Activated CD8-positive, alpha-beta T cell treated with anti-CD3 and anti-CD28 coated beads for 36 hours (primary cell): ENCODE measurements at regions of chr6 and their contacts with region 1.

Region 1: GRCh38 chr6:30483677-30484279 is 5.5 kb upstream of the HLA-E start:
- DNase-seq: peak; percentile 51
- ATAC-seq: no peak
- H3K4me3 Mint-ChIP-seq: no peak overlapping the region
- H3K27ac Mint-ChIP-seq: no peak overlapping the region
- H3K4me1 Mint-ChIP-seq: peaks cover 42% of the 10 kb centered on the region
- H3K27me3 Mint-ChIP-seq: peaks cover 37% of the 10 kb centered on the region
- CTCF ChIP-seq: peak; percentile 84

Region 2: DNA sequence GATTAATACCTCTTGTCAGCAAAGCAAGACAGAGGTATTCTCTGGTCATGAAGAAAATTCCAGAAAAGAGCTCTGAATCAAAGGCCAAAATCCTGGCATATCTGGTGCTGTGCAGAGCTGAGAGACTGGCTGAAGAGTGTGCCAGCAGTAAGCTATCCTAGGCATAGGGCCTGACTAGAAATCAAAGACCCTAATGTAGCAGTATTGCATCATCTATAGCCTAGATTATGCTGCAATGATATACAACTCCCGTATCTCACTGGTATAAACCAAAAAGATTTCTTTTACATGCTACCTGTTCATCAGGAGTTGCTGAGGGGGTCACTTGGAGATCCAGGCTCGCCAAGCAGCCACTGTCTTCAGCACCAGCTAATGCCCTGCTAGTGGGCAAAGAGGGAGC is 187.9 kb before region 1 on chr6:
- CTCF ChIA-PET with region 1: no interaction called
- POLR2A ChIA-PET with region 1: no interaction called
- intact Hi-C with region 1: no loop called
- DNase-seq: no peak
- ATAC-seq: no peak
- H3K4me3 Mint-ChIP-seq: no peak overlapping the region
- H3K27ac Mint-ChIP-seq: peak overlapping the region; percentile 25
- H3K4me1 Mint-ChIP-seq: no peaks in the 10 kb centered on the region
- H3K27me3 Mint-ChIP-seq: no peaks in the 10 kb centered on the region
- CTCF ChIP-seq: no peak

Region 3: DNA sequence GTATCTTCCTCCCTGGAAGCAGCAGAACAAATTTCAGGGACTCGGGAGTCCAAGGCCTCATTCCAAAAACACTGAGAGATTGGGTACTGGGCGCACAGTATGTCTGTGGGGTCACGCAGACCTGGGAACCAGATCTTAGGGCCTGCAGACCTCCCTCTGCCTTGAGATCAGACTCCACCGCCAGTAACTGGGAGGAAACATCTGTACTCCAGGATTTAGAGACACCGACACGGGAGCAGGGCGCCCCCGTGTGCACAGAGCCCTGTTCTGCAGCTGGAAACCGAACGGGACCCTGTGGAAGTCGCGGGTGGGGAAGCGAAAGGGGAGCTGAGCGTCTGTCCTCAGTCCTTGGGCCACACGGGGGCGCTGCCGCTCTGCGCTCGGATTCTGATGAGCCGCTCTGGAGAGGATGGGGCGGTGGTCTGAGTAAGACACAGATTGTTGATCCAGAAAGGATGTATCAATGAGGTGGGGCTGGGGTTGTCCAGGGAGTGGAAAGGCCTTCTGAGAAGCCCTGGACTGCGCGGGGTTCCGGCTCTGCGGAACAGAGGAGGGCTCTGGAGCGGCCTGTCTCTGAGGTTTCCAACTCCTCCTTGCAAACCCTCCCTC is 30.2 kb before region 1 on chr6:
- CTCF ChIA-PET with region 1: interaction called, 10 read pairs
- POLR2A ChIA-PET with region 1: interaction called, 4 read pairs
- intact Hi-C with region 1: no loop called
- DNase-seq: peak; percentile 95
- ATAC-seq: peak; percentile 91
- H3K4me3 Mint-ChIP-seq: no peak overlapping the region
- H3K27ac Mint-ChIP-seq: no peak overlapping the region
- H3K4me1 Mint-ChIP-seq: peaks cover 29% of the 10 kb centered on the region
- H3K27me3 Mint-ChIP-seq: peaks cover 82% of the 10 kb centered on the region
- CTCF ChIP-seq: peak; percentile 70

Region 4: GRCh38 chr6:30508890-30509736 is 25.3 kb after region 1 on chr6:
- CTCF ChIA-PET with region 1: interaction called, 24 read pairs
- POLR2A ChIA-PET with region 1: interaction called, 6 read pairs
- intact Hi-C with region 1: no loop called
- DNase-seq: peak; percentile 39
- ATAC-seq: peak; percentile 65
- H3K4me3 Mint-ChIP-seq: peak overlapping the region; percentile 48
- H3K27ac Mint-ChIP-seq: peak overlapping the region; percentile 95
- H3K4me1 Mint-ChIP-seq: peaks cover 53% of the 10 kb centered on the region
- H3K27me3 Mint-ChIP-seq: no peaks in the 10 kb centered on the region
- CTCF ChIP-seq: no peak

Region 5: DNA sequence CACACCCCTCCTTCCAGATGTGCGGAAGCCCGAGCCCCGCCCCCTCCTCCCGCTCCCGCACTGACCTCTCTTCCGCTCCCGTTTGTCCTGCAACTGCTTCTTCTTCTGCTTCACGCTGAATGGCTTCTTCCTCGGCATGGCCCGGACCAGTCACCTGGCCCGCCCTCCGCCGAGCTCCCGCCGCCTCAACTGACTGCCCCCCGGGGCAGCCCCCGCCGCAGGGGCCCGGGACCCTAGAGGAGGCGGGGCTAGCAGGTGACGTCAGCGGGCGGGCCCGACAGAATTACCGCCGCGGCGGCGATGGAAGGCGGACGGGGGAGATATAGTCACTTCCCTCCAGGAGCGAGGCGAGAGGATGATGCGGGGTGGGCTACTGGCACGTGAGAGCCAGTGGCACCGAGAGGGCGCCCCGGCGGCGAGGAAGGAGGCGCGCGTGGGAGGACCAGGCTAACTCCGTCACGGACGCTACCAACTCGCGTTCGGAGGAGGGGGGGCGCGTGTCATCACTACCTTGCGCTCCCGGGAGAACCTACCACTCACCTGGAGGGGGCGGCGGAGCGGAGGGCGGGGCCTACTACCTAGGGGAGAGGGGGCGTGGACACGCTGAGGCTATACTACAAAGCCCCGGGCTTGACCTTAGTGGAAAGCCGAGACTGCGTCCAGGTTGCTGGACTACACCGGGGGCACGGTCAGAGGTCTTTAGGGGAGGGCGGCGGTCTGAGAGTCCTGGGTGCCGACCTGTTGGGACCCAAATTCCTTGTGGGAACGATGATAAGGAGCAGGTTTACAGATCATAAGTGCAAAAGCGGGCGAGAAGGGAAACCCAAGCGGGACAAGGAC is 72.5 kb after region 1 on chr6 and contains the start of gene GNL1:
- CTCF ChIA-PET with region 1: interaction called, 515 read pairs
- POLR2A ChIA-PET with region 1: interaction called, 4 read pairs
- intact Hi-C with region 1: no loop called
- DNase-seq: peak; percentile 100
- ATAC-seq: peak; percentile 93
- H3K4me3 Mint-ChIP-seq: peak within 1 kb of the TSS; percentile 91
- H3K27ac Mint-ChIP-seq: peak within 1 kb of the TSS; percentile 99
- H3K4me1 Mint-ChIP-seq: peaks cover 35% of the 10 kb centered on the region
- H3K27me3 Mint-ChIP-seq: no peaks in the 10 kb centered on the region
- CTCF ChIP-seq: no peak
- total RNA-seq, gene GNL1: 107 to 122 TPM

Region 6: GRCh38 chr6:30672445-30673253 is 188.9 kb after region 1 on chr6 and contains the start of gene DHX16:
- CTCF ChIA-PET with region 1: interaction called, 11 read pairs
- POLR2A ChIA-PET with region 1: no interaction called
- intact Hi-C with region 1: no loop called
- DNase-seq: peak; percentile 95
- ATAC-seq: peak; percentile 83
- H3K4me3 Mint-ChIP-seq: peak within 1 kb of the TSS; percentile 74
- H3K27ac Mint-ChIP-seq: peak within 1 kb of the TSS; percentile 85
- H3K4me1 Mint-ChIP-seq: peaks cover 26% of the 10 kb centered on the region
- H3K27me3 Mint-ChIP-seq: no peaks in the 10 kb centered on the region
- CTCF ChIP-seq: peak; percentile 70
- total RNA-seq, gene DHX16: 31.1 to 31.3 TPM